ENCODE measurements at regions of chr2 and their contacts with region 1.

Region 1: GRCh38 chr2:108583903-108584520 is 49.7 kb downstream of the LIMS1 start:
- DNase-seq: peak; percentile 5 to 79 (median 39)
- ATAC-seq: peak; percentile 76
- H3K4me3 ChIP-seq: no peak overlapping the region
- H3K4me3 Mint-ChIP-seq: no peak overlapping the region
- H3K27ac ChIP-seq: no peak overlapping the region
- H3K27ac Mint-ChIP-seq: no peak overlapping the region
- H3K4me1 ChIP-seq: peaks cover 4% of the 10 kb centered on the region
- H3K4me1 Mint-ChIP-seq: peaks cover 12% of the 10 kb centered on the region
- H3K27me3 ChIP-seq: no peaks in the 10 kb centered on the region
- H3K27me3 Mint-ChIP-seq: no peaks in the 10 kb centered on the region
- CTCF ChIP-seq: peak; percentile 68

Region 2: GRCh38 chr2:107570876-107571275 is 1013.1 kb before region 1 on chr2:
- CTCF ChIA-PET with region 1: no interaction called
- POLR2A ChIA-PET with region 1: no interaction called
- intact Hi-C with region 1: loop called in 1 of 2 experiments (anchors 5 kb)
- DNase-seq: no peak
- ATAC-seq: no peak
- H3K4me3 ChIP-seq: no peak overlapping the region
- H3K4me3 Mint-ChIP-seq: no peak overlapping the region
- H3K27ac ChIP-seq: no peak overlapping the region
- H3K27ac Mint-ChIP-seq: no peak overlapping the region
- H3K4me1 ChIP-seq: no peaks in the 10 kb centered on the region
- H3K4me1 Mint-ChIP-seq: no peaks in the 10 kb centered on the region
- H3K27me3 ChIP-seq: no peaks in the 10 kb centered on the region
- H3K27me3 Mint-ChIP-seq: no peaks in the 10 kb centered on the region
- CTCF ChIP-seq: no peak

Region 3: DNA sequence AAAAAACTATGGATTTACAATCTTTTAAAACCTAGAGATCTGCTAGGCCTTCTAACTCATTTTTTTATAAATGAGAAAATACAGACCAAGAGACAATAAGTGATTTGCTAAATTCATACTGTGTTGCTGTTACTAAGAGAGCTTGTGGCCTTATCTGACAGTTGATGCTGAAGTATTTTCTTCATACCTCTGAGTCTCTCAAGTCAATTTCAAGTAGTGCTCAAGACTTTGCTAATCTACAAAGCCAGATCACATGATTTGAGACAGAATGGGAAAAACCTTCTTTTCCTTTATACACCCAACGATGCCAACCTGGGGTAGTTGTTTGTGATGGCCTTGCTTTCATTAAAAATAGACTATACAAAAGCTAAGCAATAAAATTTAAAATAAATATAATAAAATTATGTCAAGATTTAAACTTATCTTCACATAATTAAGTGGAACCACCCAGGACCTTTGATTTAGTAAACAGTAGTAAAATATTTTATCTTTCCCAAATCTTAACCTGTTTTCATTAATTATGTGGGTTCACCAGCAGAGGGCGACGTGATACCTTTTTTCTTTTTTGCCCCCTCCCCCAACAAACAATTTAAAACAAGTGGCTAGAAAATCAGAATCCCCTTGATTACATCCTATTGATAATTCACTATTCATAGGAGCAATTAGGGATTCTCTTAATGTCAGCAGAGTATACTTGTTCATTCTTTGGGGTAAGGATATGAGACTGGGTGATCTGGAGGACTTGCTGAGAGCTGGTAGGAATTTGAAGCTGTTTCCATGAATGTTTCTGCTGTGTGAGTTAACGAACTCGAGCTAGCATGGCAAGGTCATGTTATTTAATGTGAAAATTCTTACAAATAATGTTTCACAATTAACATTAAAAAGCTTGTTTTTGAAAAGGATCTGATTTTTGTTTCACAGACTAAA is 647.3 kb before region 1 on chr2:
- CTCF ChIA-PET with region 1: no interaction called
- POLR2A ChIA-PET with region 1: no interaction called
- intact Hi-C with region 1: loop called (anchors 5 to 10 kb)
- DNase-seq: peak in 1 of 14 experiments; percentile 2
- ATAC-seq: no peak
- H3K4me3 ChIP-seq: no peak overlapping the region
- H3K4me3 Mint-ChIP-seq: no peak overlapping the region
- H3K27ac ChIP-seq: no peak overlapping the region
- H3K27ac Mint-ChIP-seq: no peak overlapping the region
- H3K4me1 ChIP-seq: no peaks in the 10 kb centered on the region
- H3K4me1 Mint-ChIP-seq: no peaks in the 10 kb centered on the region
- H3K27me3 ChIP-seq: no peaks in the 10 kb centered on the region
- H3K27me3 Mint-ChIP-seq: peaks cover 6% of the 10 kb centered on the region
- CTCF ChIP-seq: peak; percentile 9

Region 4: DNA sequence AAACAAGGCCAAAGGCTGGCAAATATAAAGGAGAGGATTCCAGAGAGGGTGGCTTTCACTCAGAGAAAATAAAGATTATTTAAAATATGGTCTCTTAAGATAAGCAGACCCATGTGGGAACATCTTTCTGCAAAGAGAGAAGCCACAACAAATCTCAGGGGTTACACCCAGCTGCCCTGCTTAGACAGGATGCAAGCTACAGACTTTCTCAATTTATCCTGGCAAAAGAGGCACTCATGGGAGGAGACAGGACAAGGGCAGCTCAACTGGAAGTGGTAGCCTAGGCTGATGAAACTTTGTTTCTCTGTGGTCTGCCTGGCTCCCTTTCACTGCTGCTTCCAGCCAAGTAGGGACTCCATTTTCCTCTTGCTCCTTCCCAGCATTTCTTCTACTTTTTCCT is 232.1 kb before region 1 on chr2:
- CTCF ChIA-PET with region 1: no interaction called
- POLR2A ChIA-PET with region 1: interaction called, 3 read pairs
- intact Hi-C with region 1: loop called in 1 of 2 experiments (anchors 2 kb)
- DNase-seq: no peak
- ATAC-seq: no peak
- H3K4me3 ChIP-seq: no peak overlapping the region
- H3K4me3 Mint-ChIP-seq: no peak overlapping the region
- H3K27ac ChIP-seq: no peak overlapping the region
- H3K27ac Mint-ChIP-seq: no peak overlapping the region
- H3K4me1 ChIP-seq: no peaks in the 10 kb centered on the region
- H3K4me1 Mint-ChIP-seq: no peaks in the 10 kb centered on the region
- H3K27me3 ChIP-seq: peaks cover 4 to 10% of the 10 kb centered on the region in 2 experiments
- H3K27me3 Mint-ChIP-seq: peaks cover 36% of the 10 kb centered on the region
- CTCF ChIP-seq: no peak

Region 5: GRCh38 chr2:108417255-108417654 is 166.8 kb before region 1 on chr2:
- CTCF ChIA-PET with region 1: no interaction called
- POLR2A ChIA-PET with region 1: no interaction called
- intact Hi-C with region 1: loop called in 1 of 2 experiments (anchors 1 kb)
- DNase-seq: peak in 5 of 14 experiments; percentile 1 to 30 (median 9)
- ATAC-seq: no peak
- H3K4me3 ChIP-seq: no peak overlapping the region
- H3K4me3 Mint-ChIP-seq: no peak overlapping the region
- H3K27ac ChIP-seq: no peak overlapping the region
- H3K27ac Mint-ChIP-seq: no peak overlapping the region
- H3K4me1 ChIP-seq: no peaks in the 10 kb centered on the region
- H3K4me1 Mint-ChIP-seq: no peaks in the 10 kb centered on the region
- H3K27me3 ChIP-seq: no peaks in the 10 kb centered on the region
- H3K27me3 Mint-ChIP-seq: no peaks in the 10 kb centered on the region
- CTCF ChIP-seq: peak; percentile 14

Region 6: GRCh38 chr2:108428286-108429009 is 155.6 kb before region 1 on chr2:
- CTCF ChIA-PET with region 1: no interaction called
- POLR2A ChIA-PET with region 1: no interaction called
- intact Hi-C with region 1: no loop called
- DNase-seq: no peak
- ATAC-seq: no peak
- H3K4me3 ChIP-seq: no peak overlapping the region
- H3K4me3 Mint-ChIP-seq: no peak overlapping the region
- H3K27ac ChIP-seq: no peak overlapping the region
- H3K27ac Mint-ChIP-seq: no peak overlapping the region
- H3K4me1 ChIP-seq: no peaks in the 10 kb centered on the region
- H3K4me1 Mint-ChIP-seq: no peaks in the 10 kb centered on the region
- H3K27me3 ChIP-seq: no peaks in the 10 kb centered on the region
- H3K27me3 Mint-ChIP-seq: peaks cover 13% of the 10 kb centered on the region
- CTCF ChIP-seq: no peak

Region 7: DNA sequence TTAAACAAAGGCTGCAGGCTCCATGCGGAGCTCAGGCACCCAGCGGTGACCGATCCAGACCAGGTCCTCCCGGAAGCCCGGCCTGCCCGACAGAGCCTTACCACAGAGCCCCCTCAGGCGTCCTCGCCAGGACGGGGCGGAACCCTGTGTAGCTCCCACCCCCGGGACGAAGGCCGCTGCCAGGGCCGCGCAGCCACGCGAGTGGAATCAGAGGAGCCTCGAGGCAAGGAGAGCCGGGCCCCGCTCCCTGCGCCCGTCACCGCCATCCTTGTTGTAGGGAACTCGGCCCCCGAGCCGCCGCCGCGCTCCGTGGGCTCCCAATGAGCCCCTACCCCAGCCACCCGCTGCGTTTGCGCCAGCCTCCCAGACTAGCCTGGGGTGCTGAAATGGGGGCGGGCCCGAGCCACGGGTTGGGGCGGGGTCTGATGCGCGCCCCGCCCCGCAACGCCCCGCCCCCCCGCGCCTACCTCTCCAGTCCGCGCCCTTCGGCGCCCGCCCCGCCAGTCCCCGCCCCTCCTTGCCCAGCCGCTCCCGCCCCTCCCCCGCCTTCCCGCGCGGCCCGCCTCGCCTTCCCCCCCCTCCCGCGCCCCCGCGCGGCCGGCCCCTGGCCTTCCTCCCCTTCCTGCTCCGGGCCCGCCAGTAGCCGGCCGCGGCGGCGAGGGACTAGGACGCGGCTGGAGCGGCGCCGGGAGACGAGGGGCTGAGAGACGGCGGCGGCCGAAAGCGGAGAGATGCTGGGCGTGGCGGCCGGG is 50.0 kb before region 1 on chr2 and contains the start of gene LIMS1:
- CTCF ChIA-PET with region 1: no interaction called
- POLR2A ChIA-PET with region 1: no interaction called
- intact Hi-C with region 1: loop called in 1 of 2 experiments (anchors 10 kb)
- DNase-seq: peak; percentile 76 to 93 (median 86)
- ATAC-seq: peak; percentile 93
- H3K4me3 ChIP-seq: peak within 1 kb of the TSS; percentile 91
- H3K4me3 Mint-ChIP-seq: peak within 1 kb of the TSS; percentile 99
- H3K27ac ChIP-seq: peak within 1 kb of the TSS in 1 of 2 donors; percentile 50
- H3K27ac Mint-ChIP-seq: peak within 1 kb of the TSS; percentile 86
- H3K4me1 ChIP-seq: peaks cover 25% of the 10 kb centered on the region
- H3K4me1 Mint-ChIP-seq: peaks cover 41% of the 10 kb centered on the region
- H3K27me3 ChIP-seq: no peaks in the 10 kb centered on the region
- H3K27me3 Mint-ChIP-seq: no peaks in the 10 kb centered on the region
- CTCF ChIP-seq: no peak
- total RNA-seq, gene LIMS1: 18.5 to 21.3 TPM

Region 8: GRCh38 chr2:108637304-108637669 is 53.3 kb after region 1 on chr2:
- CTCF ChIA-PET with region 1: interaction called, 11 read pairs
- POLR2A ChIA-PET with region 1: no interaction called
- intact Hi-C with region 1: no loop called
- DNase-seq: peak in 2 of 14 experiments; percentile 54 to 70
- ATAC-seq: no peak
- H3K4me3 ChIP-seq: no peak overlapping the region
- H3K4me3 Mint-ChIP-seq: no peak overlapping the region
- H3K27ac ChIP-seq: no peak overlapping the region
- H3K27ac Mint-ChIP-seq: no peak overlapping the region
- H3K4me1 ChIP-seq: peaks cover 50% of the 10 kb centered on the region
- H3K4me1 Mint-ChIP-seq: peaks cover 54% of the 10 kb centered on the region
- H3K27me3 ChIP-seq: no peaks in the 10 kb centered on the region
- H3K27me3 Mint-ChIP-seq: no peaks in the 10 kb centered on the region
- CTCF ChIP-seq: no peak